ENCODE measurements at regions of chr11 and their contacts with region 1.

Region 1: DNA sequence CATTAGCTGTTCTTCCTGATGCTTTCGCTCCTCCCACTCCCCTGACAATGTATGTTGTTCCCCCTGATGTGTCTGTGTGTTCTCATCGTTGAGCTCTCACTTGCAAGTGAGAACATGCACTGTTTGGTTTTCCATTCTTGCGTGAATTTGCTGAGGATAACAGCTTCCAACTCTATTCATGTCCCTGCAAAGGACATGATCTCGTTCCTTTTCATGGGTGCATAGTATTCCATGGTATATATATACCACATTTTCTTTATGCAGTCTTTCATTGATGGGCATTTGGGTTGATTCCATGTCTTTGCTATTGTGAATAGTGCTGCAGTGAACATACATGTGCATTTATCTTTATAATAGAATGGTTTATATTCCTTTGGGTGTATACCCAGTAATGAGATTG is 58.6 kb upstream of the RRM1 start:
- DNase-seq: no peak
- H3K4me3 ChIP-seq: no peak overlapping the region
- H3K27ac ChIP-seq: no peak overlapping the region
- H3K4me1 ChIP-seq: peaks cover 4% of the 10 kb centered on the region
- H3K27me3 ChIP-seq: no peaks in the 10 kb centered on the region
- CTCF ChIP-seq: no peak

Region 2: DNA sequence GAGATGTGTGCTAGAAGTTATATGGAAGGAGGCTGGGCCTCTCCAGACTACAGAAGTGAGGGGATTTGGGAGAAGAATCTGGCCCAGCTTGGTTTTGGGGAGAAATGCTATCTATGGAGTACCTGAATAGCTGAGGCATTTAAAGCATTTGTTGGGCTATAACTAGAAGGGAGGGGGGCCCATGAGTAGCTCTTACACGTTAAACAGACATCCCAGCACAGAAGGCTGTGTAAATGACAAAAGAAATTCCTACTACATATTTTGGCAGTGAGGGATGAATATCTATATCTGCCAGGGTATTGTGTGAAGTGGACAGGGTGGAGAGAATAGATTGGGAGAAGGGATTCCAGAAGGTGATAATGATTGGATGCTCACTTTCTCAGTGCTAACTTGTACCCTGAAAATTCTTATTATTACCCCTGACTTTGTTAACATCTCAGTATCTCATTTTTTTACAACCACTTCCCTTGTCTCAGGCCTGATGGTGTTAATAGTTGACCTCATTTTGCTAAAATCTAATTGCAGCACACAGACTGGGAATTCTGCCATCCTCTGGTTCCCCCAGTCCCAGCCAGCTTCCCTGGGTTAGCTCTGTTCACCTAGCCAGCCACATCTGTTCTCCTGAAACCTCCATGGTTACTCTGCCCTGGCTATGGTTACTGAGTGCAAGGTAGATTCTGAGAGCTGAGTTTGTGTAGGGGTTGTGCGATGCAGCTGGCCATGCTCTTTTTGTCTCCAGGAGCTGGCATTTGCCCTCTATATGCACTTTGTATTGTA is 29.8 kb after region 1 on chr11:
- intact Hi-C with region 1: loop called (anchors 2 kb)
- DNase-seq: no peak
- H3K4me3 ChIP-seq: no peak overlapping the region
- H3K27ac ChIP-seq: no peak overlapping the region
- H3K4me1 ChIP-seq: peaks cover 26% of the 10 kb centered on the region
- H3K27me3 ChIP-seq: no peaks in the 10 kb centered on the region
- CTCF ChIP-seq: no peak